ENCODE measurements at regions of chr11 and their contacts with region 1.

Region 1: DNA sequence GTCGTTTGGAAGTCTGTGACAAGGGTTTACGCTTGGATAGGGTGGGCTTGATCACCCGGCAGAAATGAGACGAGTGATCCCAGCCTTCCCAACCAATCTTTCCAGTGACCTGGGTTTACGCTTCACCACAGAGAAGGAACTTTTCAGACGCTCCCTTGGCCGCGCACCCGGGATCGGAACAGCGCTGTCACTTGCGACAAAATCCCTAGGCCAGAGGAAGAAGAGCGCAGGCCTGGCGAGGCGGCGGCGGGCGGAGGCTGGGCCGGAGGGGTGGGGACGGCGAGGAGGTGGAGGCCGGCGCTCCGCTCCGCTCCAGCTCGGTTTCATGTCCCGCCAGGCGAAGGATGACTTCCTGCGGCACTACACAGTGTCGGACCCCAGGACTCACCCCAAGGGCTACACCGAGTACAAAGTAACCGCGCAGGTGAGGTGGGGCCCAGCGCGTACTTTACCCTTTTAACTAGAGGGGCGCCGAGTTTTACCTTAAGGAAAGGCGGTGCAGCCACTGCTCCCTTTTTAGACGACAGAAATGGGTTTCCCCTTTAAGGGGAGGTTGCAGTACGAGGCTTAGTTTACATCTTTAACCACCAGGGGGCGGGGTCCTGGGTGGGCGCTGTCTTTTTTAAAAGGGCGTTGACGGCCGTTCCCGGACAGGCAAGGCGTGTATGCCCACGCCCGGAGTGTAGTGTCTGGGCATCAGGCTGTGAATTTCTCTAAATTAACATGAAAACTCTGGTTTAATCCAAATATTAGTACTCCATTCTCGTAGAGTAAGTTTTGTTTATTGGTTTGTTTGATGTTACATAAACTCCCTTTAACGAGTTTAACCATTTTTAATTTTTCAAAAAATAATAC is at the start of gene SNX15:
- DNase-seq: peak; percentile 72
- ATAC-seq: peak; percentile 90
- H3K4me3 Mint-ChIP-seq: peak within 1 kb of the TSS; percentile 85
- H3K27ac Mint-ChIP-seq: peak within 1 kb of the TSS; percentile 88
- H3K4me1 Mint-ChIP-seq: peaks cover 21% of the 10 kb centered on the region
- H3K27me3 Mint-ChIP-seq: no peaks in the 10 kb centered on the region
- CTCF ChIP-seq: no peak
- total RNA-seq, gene SNX15: 17.3 and 19.3 TPM in 2 replicates

Region 2: DNA sequence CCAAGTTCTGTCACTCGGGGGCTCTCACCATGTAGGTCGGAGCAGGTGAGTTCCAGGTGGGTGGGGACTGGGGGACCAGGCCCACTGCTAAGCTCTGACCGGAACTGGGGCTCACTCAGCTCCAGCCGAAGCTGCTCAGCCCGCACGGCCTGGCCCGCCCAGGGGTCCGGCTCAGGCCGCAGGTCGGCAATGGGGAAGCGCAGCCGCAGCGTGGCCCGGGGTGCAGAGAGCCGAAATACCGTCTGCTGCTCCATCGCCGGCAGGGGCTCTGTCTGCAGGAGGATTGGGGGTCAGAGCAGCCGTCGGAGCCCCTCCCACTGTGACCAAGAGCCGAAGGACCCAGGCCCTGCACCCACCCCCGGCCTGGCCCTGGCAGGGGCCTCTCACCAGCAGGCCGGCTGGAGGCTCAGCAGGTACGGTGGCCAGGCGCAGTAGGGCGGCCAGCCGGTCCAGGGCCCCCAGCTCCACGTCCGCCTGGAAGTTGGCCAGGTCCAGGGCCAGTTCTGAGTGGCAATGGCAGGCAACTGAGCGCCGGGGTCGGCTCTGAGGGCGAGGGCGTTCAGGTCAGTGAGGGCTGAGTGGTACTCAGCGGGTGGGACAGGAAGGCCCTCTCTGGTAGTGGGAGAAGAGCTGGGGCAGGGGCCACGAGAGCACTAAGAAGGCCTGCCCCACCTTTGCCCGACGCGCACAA is 117.6 kb before region 1 on chr11:
- CTCF ChIA-PET with region 1: no interaction called
- POLR2A ChIA-PET with region 1: no interaction called
- intact Hi-C with region 1: no loop called
- DNase-seq: no peak
- ATAC-seq: no peak
- H3K4me3 Mint-ChIP-seq: no peak overlapping the region
- H3K27ac Mint-ChIP-seq: no peak overlapping the region
- H3K4me1 Mint-ChIP-seq: peaks cover 2% of the 10 kb centered on the region
- H3K27me3 Mint-ChIP-seq: no peaks in the 10 kb centered on the region
- CTCF ChIP-seq: no peak

Region 3: DNA sequence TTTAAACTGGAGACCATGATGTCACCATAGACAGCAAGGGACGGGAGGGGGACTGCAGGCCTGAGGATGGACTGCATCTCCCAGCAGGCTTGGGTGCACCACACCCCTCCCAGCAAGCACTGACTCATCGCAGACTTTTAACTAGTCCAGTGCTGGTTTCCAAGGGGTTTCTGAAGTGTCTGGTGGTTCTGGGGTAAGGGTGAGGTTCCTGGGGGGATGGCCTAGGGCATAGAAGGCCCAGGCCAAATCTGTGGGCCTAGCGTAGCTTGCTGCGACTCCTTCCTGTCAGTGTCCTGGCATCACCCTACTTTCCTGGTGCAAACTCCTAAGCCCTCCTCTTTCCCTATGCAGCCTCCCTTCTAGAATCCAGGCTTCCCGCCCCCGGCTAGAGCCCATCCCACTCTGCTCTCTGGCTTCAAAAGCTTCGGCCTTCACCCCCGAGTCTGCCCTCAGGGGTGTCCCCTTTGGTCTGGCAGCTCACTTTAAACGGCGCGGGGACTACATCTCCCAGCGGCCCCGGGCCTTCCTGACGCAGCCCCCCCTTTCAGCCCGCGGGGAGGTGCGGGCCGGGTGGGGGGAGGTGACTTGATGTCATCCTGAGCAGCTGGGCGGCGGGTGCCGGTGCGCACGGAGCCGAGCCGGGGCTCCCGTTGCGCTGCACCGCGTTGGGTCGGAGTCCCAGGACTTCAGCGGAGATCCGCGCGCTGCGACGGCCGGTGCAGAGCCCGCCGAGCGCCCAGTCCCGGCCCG is 103.2 kb before region 1 on chr11 and contains the start of gene PPP2R5B:
- CTCF ChIA-PET with region 1: interaction called, 3 read pairs
- POLR2A ChIA-PET with region 1: interaction called, 4 read pairs
- intact Hi-C with region 1: loop called (anchors 1 kb)
- DNase-seq: peak; percentile 83
- ATAC-seq: peak; percentile 95
- H3K4me3 Mint-ChIP-seq: peak within 1 kb of the TSS; percentile 93
- H3K27ac Mint-ChIP-seq: peak within 1 kb of the TSS; percentile 96
- H3K4me1 Mint-ChIP-seq: peaks cover 27% of the 10 kb centered on the region
- H3K27me3 Mint-ChIP-seq: no peaks in the 10 kb centered on the region
- CTCF ChIP-seq: no peak
- total RNA-seq, gene PPP2R5B: 12.0 and 12.6 TPM in 2 replicates

Region 4: DNA sequence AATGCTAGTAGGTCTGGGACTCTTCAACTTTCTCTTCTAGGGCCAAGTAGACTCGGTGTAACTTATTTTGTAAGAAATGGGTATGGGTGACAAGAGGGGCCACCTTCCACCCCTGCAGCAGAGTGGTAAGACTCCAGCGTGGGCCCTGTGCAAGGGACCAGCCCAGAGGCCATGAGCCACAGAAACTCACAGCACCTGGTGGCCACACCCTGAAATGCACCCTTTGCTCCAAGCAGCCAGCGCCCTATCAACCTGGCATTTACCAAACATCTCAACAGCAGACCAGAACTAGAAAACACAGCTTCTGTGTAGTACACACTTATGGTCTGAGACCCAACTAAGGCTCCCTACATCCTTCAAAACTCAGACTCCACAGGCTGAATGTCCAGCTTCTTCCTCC is 50.7 kb after region 1 on chr11:
- CTCF ChIA-PET with region 1: no interaction called
- POLR2A ChIA-PET with region 1: interaction called, 4 read pairs
- intact Hi-C with region 1: loop called (anchors 1 kb)
- DNase-seq: peak; percentile 51
- ATAC-seq: peak; percentile 99
- H3K4me3 Mint-ChIP-seq: no peak overlapping the region
- H3K27ac Mint-ChIP-seq: peak overlapping the region; percentile 41
- H3K4me1 Mint-ChIP-seq: peaks cover 10% of the 10 kb centered on the region
- H3K27me3 Mint-ChIP-seq: no peaks in the 10 kb centered on the region
- CTCF ChIP-seq: no peak

Region 5: DNA sequence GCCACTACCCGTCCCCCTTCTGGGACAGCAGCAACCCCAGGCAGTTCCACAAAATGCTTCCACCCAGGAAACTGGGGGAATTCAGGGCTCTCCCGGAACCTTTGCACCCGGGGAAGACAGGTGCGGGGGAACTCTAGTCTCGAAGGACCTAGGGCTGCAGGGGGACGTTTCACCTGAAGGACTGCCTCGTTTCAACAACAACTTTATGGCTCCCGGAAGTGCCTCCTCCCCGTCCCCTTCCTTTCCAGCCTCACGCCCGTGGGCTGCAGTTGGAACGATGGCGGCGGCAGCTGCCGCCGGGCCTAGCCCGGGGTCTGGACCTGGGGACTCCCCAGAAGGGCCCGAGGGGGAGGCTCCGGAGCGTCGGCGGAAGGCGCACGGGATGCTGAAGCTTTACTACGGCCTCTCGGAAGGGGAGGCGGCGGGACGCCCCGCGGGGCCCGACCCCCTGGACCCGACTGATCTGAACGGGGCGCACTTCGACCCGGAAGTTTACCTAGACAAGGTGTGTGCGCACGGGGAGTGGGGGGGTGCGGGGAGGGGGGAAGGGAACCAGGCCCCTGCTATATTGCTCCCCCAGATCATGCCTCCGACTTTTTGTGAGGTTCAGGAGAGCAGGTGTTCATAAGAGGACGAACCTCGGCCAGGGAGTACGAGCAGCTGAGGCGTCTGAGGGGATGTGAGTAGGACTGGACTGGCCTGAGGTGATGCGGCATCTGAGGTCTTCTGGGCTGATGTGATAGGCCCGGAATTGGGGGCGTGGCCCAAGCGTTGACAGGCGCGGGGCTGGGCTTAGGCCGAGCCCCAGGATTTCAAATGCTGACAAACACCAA is 68.8 kb after region 1 on chr11 and contains the start of gene VPS51:
- CTCF ChIA-PET with region 1: no interaction called
- POLR2A ChIA-PET with region 1: interaction called, 6 read pairs
- intact Hi-C with region 1: loop called (anchors 1 kb)
- DNase-seq: peak; percentile 74
- ATAC-seq: peak; percentile 92
- H3K4me3 Mint-ChIP-seq: peak within 1 kb of the TSS; percentile 91
- H3K27ac Mint-ChIP-seq: peak within 1 kb of the TSS; percentile 88
- H3K4me1 Mint-ChIP-seq: peaks cover 18% of the 10 kb centered on the region
- H3K27me3 Mint-ChIP-seq: no peaks in the 10 kb centered on the region
- CTCF ChIP-seq: no peak
- total RNA-seq, gene VPS51: 224 and 243 TPM in 2 replicates

Measured in activated B cell treated with CpG ODN at 0.5 μM for 24 hours (primary cell).